ENCODE measurements at regions of chr17 and their contacts with region 1.

Region 1: DNA sequence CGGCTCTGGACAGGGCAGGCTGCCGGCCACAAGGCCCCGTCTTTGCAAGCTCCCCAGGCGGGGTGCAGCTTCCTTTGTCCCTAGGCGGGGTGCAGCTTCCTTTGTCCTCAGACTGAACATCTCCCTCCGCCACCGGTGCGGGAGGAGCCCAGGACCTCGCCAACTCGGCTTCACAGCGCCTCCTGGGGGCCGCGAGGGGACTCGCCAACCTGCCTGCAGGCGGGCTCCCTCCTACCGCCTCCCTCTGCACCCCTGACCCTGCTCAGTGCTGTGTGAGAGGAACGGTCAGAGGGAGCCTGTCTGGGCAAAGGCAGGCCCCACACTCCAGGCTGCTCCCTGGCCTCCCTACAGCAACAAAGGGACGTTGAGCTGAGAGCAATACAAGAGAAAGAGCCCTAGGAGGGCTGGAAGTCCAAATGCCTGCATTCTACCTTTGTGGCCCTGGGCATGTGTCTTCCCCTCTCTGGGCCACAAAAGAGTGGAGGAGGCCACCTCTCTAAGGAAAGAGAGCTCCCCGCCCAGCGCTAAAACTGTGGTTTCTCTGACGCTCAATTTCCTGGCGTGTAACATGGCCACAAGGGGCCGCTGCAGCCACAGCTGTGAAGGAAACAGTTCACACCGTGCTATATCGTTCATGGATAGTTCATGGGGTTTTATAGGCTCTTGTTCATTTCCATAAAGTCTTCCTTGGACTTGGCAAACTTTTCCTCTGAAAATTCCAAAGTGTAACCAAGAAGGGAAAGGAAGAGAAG is 20.9 kb upstream of the KRT19 start:
- DNase-seq: peak; percentile 73 to 91 (median 82)
- ATAC-seq: peak; percentile 85
- H3K4me3 ChIP-seq: peak overlapping the region; percentile 42
- H3K4me3 Mint-ChIP-seq: peak overlapping the region; percentile 2
- H3K27ac ChIP-seq: no peak overlapping the region
- H3K27ac Mint-ChIP-seq: peak overlapping the region; percentile 65
- H3K4me1 ChIP-seq: peaks cover 23% of the 10 kb centered on the region
- H3K4me1 Mint-ChIP-seq: peaks cover 9% of the 10 kb centered on the region
- H3K27me3 ChIP-seq: no peaks in the 10 kb centered on the region
- H3K27me3 Mint-ChIP-seq: peaks cover 15% of the 10 kb centered on the region
- CTCF ChIP-seq: peak; percentile 96

Region 2: GRCh38 chr17:40854159-40854814 is 694.7 kb before region 1 on chr17:
- CTCF ChIA-PET with region 1: interaction called, 12 read pairs
- POLR2A ChIA-PET with region 1: no interaction called
- intact Hi-C with region 1: loop called in 1 of 2 experiments (anchors 5 kb)
- DNase-seq: peak in 1 of 14 experiments; percentile 3
- ATAC-seq: no peak
- H3K4me3 ChIP-seq: no peak overlapping the region
- H3K4me3 Mint-ChIP-seq: no peak overlapping the region
- H3K27ac ChIP-seq: no peak overlapping the region
- H3K27ac Mint-ChIP-seq: no peak overlapping the region
- H3K4me1 ChIP-seq: no peaks in the 10 kb centered on the region
- H3K4me1 Mint-ChIP-seq: peaks cover 4% of the 10 kb centered on the region
- H3K27me3 ChIP-seq: peaks cover 0 to 22% of the 10 kb centered on the region in 2 experiments
- H3K27me3 Mint-ChIP-seq: peaks cover 34% of the 10 kb centered on the region
- CTCF ChIP-seq: no peak

Region 3: GRCh38 chr17:41121742-41122141 is 427.3 kb before region 1 on chr17:
- CTCF ChIA-PET with region 1: no interaction called
- POLR2A ChIA-PET with region 1: no interaction called
- intact Hi-C with region 1: loop called in 1 of 2 experiments (anchors 5 kb)
- DNase-seq: no peak
- ATAC-seq: no peak
- H3K4me3 ChIP-seq: no peak overlapping the region
- H3K4me3 Mint-ChIP-seq: no peak overlapping the region
- H3K27ac ChIP-seq: no peak overlapping the region
- H3K27ac Mint-ChIP-seq: no peak overlapping the region
- H3K4me1 ChIP-seq: peaks cover 25% of the 10 kb centered on the region
- H3K4me1 Mint-ChIP-seq: peaks cover 71% of the 10 kb centered on the region
- H3K27me3 ChIP-seq: no peaks in the 10 kb centered on the region
- H3K27me3 Mint-ChIP-seq: no peaks in the 10 kb centered on the region
- CTCF ChIP-seq: no peak

Region 4: DNA sequence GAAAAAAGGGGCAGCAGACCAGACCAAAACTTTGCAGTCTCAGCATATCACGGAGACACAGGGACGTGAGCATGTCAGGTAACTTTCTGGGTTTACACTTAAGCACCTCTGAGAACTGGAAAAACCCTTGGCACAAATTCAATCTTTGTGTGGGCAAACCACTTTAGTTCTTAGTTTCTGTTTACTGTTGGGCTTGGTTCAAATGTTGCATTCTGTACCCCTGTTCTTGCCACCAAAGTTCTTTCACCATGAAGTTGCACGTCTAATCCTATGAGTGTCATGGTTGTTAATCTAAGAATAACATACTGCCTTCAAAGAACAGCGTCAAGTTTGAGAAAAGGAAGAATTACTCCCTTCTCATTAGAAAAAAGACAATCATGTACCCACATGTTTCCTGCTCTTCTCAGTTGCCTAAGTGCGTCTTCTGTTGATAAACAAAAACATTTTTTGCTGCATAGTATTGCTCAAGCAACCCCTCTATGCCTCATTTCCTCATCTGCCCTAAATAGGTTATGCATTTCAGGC is 210.0 kb before region 1 on chr17:
- CTCF ChIA-PET with region 1: interaction called, 4 read pairs
- POLR2A ChIA-PET with region 1: interaction called, 3 read pairs
- intact Hi-C with region 1: loop called in 1 of 2 experiments (anchors 5 kb)
- DNase-seq: peak in 8 of 14 experiments; percentile 25 to 93 (median 52)
- ATAC-seq: peak; percentile 83
- H3K4me3 ChIP-seq: no peak overlapping the region
- H3K4me3 Mint-ChIP-seq: peak overlapping the region; percentile 23
- H3K27ac ChIP-seq: peak overlapping the region; percentile 87 to 88
- H3K27ac Mint-ChIP-seq: peak overlapping the region; percentile 94
- H3K4me1 ChIP-seq: peaks cover 88% of the 10 kb centered on the region
- H3K4me1 Mint-ChIP-seq: peaks cover 88% of the 10 kb centered on the region
- H3K27me3 ChIP-seq: no peaks in the 10 kb centered on the region
- H3K27me3 Mint-ChIP-seq: no peaks in the 10 kb centered on the region
- CTCF ChIP-seq: no peak